BJ (cell line): ENCODE measurements at regions of chr1 and their contacts with region 1.

Region 1: GRCh38 chr1:201709564-201710295 is 119.2 kb upstream of the IPO9 start:
- DNase-seq: no peak
- H3K4me3 ChIP-seq: no peak overlapping the region
- H3K27me3 ChIP-seq: no peaks in the 10 kb centered on the region
- CTCF ChIP-seq: peak; percentile 96

Region 2: DNA sequence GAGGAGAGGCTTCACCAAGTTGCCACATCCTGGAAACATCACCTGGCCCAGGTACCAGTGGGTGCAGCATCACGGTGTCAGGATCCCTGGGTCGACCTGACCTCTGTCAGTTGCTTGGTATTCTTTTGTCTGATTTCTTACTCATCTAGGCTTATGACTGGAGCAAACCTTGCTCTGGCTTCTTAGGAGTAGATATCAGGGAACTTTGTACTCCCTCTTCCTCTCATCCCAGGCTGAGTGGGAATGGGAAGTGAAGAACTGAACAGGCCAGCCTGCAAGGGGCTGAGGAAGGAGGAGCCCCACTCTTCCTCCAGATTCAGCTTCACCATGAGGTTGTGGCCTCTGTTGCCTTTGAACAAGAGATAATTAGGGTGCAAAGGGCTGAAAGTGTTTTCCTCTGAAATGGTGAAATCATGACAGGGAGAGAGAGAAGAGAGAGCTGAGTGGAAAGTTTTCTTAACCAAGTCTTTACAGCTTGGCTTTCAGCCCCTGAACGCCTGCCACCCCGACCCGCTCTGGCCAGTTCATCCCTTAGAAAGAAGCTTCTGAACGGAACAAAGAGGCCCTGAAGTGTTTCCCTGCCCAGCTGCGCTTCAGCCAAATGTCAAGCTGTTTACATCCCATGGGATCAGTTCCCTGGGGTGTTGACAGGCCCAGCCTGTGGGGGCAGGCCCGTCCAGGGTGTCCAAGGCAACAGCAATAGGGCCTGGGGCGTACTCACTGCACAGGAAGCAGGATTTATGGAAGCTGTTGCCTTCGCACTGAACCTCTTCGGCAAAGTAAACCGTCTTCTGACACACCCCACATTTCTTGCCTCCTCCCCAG is 214.0 kb before region 1 on chr1:
- CTCF ChIA-PET with region 1: no interaction called
- POLR2A ChIA-PET with region 1: no interaction called
- DNase-seq: no peak
- H3K4me3 ChIP-seq: no peak overlapping the region
- H3K27me3 ChIP-seq: no peaks in the 10 kb centered on the region
- CTCF ChIP-seq: no peak

Region 3: DNA sequence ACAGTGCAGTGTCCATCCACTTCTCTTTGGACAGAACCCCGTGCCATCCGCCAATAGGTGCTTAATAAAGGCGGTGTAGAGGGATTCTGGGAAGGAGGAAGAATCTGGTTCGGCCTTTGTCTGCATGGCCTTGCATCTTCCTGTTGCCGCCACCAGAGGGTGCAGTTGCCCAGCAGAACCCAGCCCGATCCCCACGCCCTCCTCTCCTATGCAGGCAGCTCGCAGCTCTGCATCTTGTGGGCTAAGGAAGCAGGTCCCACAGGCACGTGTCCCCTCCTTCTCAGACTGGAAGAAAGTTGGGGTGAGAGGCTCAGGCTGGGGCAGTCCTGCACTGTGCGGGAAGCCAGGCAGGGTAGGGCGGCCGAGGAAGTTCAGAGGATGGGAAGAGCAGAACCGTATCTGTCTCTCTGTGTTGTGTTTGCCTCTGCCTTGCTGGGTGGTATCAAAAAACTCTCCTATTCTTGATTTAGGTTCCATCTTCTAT is 150.0 kb before region 1 on chr1:
- CTCF ChIA-PET with region 1: interaction called, 269 read pairs
- POLR2A ChIA-PET with region 1: interaction called, 3 read pairs
- DNase-seq: no peak
- H3K4me3 ChIP-seq: no peak overlapping the region
- H3K27me3 ChIP-seq: no peaks in the 10 kb centered on the region
- CTCF ChIP-seq: peak; percentile 91

Region 4: DNA sequence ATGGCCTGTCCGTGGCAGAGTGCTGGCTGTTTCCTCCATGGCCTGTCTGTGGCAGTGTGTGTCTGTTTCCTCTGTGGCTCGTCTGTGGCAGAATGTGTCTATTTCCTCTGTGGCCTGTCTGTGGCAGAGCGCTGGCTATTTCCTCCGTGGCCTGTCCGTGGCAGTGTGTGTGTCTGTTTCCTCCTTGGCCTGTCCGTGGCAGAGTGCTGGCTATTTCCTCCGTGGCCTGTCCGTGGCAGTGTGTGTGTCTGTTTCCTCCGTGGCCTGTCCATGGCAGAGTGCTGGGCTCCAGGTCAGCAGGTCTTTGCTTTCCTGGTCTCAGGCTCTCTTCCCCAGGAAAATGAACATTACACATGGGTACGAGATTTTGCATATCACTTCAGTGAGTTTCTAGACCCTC is 19.2 kb before region 1 on chr1:
- CTCF ChIA-PET with region 1: no interaction called
- POLR2A ChIA-PET with region 1: no interaction called
- DNase-seq: no peak
- H3K4me3 ChIP-seq: no peak overlapping the region
- H3K27me3 ChIP-seq: no peaks in the 10 kb centered on the region
- CTCF ChIP-seq: no peak

Region 5: DNA sequence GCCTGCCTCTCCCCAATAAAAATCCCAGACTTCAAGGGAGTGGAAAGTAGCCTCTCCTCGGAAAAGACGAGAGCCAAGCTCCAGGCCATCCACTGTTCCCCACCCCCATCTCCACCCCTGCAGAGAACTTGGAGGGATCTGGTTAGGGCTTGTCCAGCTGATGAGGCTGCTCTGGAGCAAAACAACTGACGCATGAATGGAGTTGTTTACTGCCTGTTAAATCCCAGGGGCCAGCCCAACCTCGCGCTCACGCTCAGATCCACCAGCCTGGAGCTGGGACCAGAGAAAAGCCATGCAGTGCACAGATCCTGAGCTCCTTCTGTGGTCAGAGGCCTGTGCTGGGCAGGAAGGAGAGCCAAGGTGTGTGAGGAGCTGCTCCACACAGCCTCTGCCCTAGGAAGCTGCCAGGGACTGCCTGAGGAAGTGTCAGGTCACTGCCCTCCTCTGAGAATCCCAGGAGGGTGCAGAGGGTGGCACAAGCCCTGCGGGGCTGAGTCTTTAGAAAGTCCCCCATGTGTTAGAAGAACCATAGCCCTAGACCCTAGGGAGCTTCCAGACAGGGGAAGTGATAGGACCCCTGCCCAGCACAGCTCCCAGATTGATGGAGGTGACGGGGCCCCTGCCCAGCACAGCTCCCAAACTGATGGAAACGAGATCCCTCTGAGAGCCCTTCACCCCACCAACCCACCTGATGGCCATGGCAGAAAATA is 10.2 kb after region 1 on chr1:
- CTCF ChIA-PET with region 1: interaction called, 23 read pairs
- POLR2A ChIA-PET with region 1: interaction called, 3 read pairs
- DNase-seq: peak; percentile 68
- H3K4me3 ChIP-seq: no peak overlapping the region
- H3K27me3 ChIP-seq: no peaks in the 10 kb centered on the region
- CTCF ChIP-seq: no peak

Region 6: GRCh38 chr1:201748335-201748734 is 38.6 kb after region 1 on chr1:
- CTCF ChIA-PET with region 1: interaction called, 25 read pairs
- POLR2A ChIA-PET with region 1: interaction called, 6 read pairs
- DNase-seq: peak; percentile 81
- H3K4me3 ChIP-seq: no peak overlapping the region
- H3K27me3 ChIP-seq: no peaks in the 10 kb centered on the region
- CTCF ChIP-seq: no peak

Region 7: DNA sequence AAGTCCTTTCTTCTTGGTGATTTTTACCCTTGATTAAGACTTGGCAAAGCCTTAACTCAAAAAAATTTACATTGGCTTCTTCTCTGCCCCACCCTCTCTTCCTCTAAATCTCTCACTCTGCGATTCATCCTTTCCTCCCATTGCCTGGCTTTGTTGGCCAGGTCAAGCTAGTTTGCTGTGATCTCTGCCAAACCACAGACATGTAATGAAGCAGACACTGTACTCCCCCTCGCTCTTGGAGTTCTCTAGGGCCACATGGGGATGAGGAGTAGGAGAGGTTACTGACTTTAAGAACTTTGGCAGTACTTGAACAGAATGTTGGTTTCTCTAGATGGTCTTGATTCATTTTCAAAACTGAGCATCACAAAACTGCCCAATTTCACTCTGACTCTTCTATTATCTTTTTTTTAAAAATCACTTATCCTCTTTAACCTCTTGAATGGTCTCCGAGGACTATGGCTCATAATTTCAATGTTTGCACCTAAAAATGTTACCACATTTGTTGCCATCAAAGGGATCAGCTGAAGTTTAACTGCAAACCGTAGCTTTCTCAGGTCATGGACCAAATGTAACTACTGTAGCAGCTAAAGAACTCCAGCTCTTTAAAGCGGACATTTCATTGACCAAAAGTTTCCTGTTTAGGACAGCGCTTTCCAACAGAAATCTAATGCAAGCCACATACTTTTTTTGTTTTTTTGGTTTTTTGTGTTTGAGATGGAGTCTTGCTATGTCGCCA is 56.6 kb after region 1 on chr1:
- CTCF ChIA-PET with region 1: interaction called, 51 read pairs
- POLR2A ChIA-PET with region 1: no interaction called
- DNase-seq: peak; percentile 86
- H3K4me3 ChIP-seq: no peak overlapping the region
- H3K27me3 ChIP-seq: no peaks in the 10 kb centered on the region
- CTCF ChIP-seq: no peak